ENCODE measurements at regions of chr4 and their contacts with region 1.

Region 1: DNA sequence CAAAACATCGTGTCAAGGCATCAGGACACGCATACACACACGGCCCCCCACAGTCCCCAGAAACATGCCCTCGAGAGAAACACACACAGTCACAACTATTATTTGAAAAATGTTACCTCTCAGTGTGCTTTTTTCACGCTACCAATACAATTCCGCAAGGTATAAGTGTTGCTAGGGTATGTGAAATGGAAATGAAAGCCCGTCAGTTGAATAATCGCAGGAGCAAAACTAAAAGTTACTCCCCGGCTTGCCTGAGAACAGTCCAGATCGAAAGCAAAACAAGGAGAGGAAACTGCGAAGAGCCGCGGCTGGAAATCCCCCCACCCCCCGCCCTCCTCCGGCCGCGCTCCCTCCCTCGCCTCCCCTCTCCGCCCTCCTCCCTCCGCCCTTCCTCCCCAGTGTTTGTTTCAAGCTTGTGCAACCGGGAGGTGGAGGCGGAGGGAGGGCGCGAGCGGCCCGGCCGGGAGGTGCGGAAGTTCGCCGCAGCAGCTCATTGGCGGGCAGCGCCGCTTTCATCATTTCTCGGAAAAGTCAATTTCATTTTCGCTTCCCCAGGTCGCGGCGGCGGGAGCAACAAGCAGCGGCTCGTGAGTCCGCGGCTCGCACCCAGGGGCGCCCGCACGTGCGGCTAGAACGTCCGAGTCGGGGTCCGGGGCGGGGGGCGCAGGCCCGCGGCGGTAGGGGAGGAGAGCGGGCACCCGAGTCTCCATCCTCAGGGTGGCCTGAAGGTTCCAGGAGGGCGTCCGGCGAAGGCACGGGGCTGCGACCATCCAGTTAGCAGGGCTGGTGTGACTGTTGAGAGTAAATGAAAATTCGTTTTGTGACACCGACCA is at the start of gene IRF2:
- DNase-seq: peak; percentile 92
- H3K4me3 Mint-ChIP-seq: peak within 1 kb of the TSS; percentile 88
- H3K27ac Mint-ChIP-seq: peak within 1 kb of the TSS; percentile 96
- H3K4me1 Mint-ChIP-seq: peaks cover 15% of the 10 kb centered on the region
- H3K27me3 Mint-ChIP-seq: no peaks in the 10 kb centered on the region
- CTCF ChIP-seq: no peak
- total RNA-seq, gene IRF2: 27.3 and 28.2 TPM in 2 replicates

Region 2: DNA sequence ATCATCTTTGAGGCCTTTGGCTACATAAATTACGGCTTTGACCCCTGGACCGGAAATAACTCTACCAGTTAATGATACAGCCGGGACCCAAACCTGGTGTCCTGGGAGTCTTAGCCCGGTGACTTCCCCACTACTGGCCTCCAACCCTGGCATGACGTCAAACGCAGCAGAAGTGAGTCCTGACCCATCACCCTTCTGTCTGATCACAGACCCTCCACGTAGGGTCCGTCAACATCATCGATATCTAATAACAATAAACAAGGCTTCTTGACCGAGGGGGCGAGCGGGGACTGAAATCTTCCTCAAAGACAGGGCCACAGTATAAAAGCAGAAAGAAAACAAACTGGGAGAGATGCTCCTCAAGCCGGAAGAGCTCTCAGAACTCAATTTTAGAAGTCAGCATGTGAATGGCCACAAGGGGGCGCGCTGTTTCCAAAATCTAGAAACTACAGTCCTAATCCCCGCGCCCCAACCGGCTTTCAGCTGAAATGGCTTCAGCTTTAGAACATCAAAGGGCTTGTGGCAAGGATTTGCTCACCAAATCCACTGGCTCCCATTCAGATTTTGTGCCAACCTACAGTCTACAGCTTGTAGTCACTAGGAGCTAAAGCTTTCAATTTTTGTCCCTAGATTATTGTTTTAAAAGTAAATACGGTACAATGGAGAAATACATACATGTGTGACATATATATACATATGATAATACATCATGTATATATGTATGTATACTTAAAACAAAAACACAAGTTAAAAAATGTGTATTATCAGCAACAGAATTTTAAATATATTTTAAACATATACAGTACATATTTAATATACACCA is 210.4 kb before region 1 on chr4:
- CTCF ChIA-PET with region 1: interaction called, 3 read pairs
- intact Hi-C with region 1: loop called (anchors 1 kb)
- DNase-seq: peak; percentile 84
- H3K4me3 Mint-ChIP-seq: peak overlapping the region; percentile 19
- H3K27ac Mint-ChIP-seq: no peak overlapping the region
- H3K4me1 Mint-ChIP-seq: peaks cover 19% of the 10 kb centered on the region
- H3K27me3 Mint-ChIP-seq: no peaks in the 10 kb centered on the region
- CTCF ChIP-seq: peak; percentile 66

Region 3: DNA sequence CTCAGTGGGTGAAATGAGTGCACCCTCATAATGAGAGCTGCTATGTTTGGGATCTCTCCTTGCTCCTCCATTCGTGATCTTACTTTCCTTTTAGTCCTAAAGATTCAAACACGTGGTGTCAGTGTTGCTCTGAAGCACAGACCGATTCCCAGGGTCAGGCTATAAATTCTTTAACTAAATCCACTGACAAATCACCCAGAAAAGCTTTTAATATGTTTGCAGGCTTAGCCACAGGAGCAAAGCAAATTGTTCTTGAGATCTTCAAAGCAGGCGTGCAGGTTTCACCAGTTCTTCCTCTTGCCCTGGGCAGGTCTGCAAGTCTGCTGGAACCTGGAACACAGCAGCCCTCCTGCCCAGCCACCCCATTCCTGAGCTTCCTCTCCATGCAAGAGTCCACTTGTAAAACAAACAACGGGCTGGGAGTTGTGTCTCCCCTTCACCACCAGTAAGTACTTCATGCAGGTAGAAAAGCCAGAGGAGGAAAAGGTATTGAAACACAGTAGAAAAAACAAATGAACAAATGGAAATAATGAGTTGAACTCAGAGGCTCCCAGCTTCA is 186.7 kb before region 1 on chr4:
- CTCF ChIA-PET with region 1: no interaction called
- intact Hi-C with region 1: loop called (anchors 2 kb)
- DNase-seq: peak; percentile 66
- H3K4me3 Mint-ChIP-seq: peak overlapping the region; percentile 62
- H3K27ac Mint-ChIP-seq: peak overlapping the region; percentile 87
- H3K4me1 Mint-ChIP-seq: peaks cover 22% of the 10 kb centered on the region
- H3K27me3 Mint-ChIP-seq: no peaks in the 10 kb centered on the region
- CTCF ChIP-seq: no peak

Region 4: GRCh38 chr4:184343502-184344177 is 130.8 kb before region 1 on chr4:
- CTCF ChIA-PET with region 1: no interaction called
- intact Hi-C with region 1: loop called (anchors 5 kb)
- DNase-seq: peak; percentile 65
- H3K4me3 Mint-ChIP-seq: peak overlapping the region; percentile 67
- H3K27ac Mint-ChIP-seq: peak overlapping the region; percentile 45
- H3K4me1 Mint-ChIP-seq: peaks cover 59% of the 10 kb centered on the region
- H3K27me3 Mint-ChIP-seq: no peaks in the 10 kb centered on the region
- CTCF ChIP-seq: no peak

Region 5: GRCh38 chr4:184384056-184384809 is 90.2 kb before region 1 on chr4:
- CTCF ChIA-PET with region 1: no interaction called
- intact Hi-C with region 1: loop called (anchors 2 kb)
- DNase-seq: peak; percentile 49
- H3K4me3 Mint-ChIP-seq: peak overlapping the region; percentile 60
- H3K27ac Mint-ChIP-seq: peak overlapping the region; percentile 89
- H3K4me1 Mint-ChIP-seq: peaks cover 49% of the 10 kb centered on the region
- H3K27me3 Mint-ChIP-seq: no peaks in the 10 kb centered on the region
- CTCF ChIP-seq: no peak

Region 6: GRCh38 chr4:184538023-184538599 is 63.6 kb after region 1 on chr4:
- CTCF ChIA-PET with region 1: interaction called, 3 read pairs
- intact Hi-C with region 1: loop called (anchors 2 kb)
- DNase-seq: peak; percentile 70
- H3K4me3 Mint-ChIP-seq: peak overlapping the region; percentile 88
- H3K27ac Mint-ChIP-seq: peak overlapping the region; percentile 94
- H3K4me1 Mint-ChIP-seq: peaks cover 10% of the 10 kb centered on the region
- H3K27me3 Mint-ChIP-seq: no peaks in the 10 kb centered on the region
- CTCF ChIP-seq: peak; percentile 23

Measured in Calu3 (cell line).